ENCODE measurements at regions of chr12 and their contacts with region 1.

Region 1: GRCh38 chr12:50074936-50075807 is 10.0 kb upstream of the SMARCD1 start:
- DNase-seq: peak; percentile 90 to 94
- H3K4me3 ChIP-seq: no peak overlapping the region
- H3K27ac ChIP-seq: peak overlapping the region in 2 of 5 donors; percentile 7 to 16
- H3K4me1 ChIP-seq: peaks cover 0 to 20% (median 18%) of the 10 kb centered on the region in 4 donors
- H3K27me3 ChIP-seq: no peaks in the 10 kb centered on the region
- CTCF ChIP-seq: peak in 5 of 7 experiments; percentile 89 to 95 (median 93)
- EP300 ChIP-seq: no peak
- POLR2A ChIP-seq: no peak

Region 2: GRCh38 chr12:49967042-49967776 is 108.0 kb before region 1 on chr12:
- intact Hi-C with region 1: loop called (anchors 5 kb)
- DNase-seq: peak; percentile 95 to 96
- H3K4me3 ChIP-seq: peak overlapping the region; percentile 37 to 49 (median 40)
- H3K27ac ChIP-seq: peak overlapping the region in 2 of 5 donors; percentile 17 to 27
- H3K4me1 ChIP-seq: peaks cover 8 to 41% (median 34%) of the 10 kb centered on the region in 4 donors
- H3K27me3 ChIP-seq: peaks cover 0 to 46% (median 0%) of the 10 kb centered on the region in 3 donors
- CTCF ChIP-seq: peak in 6 of 7 experiments; percentile 70 to 97 (median 90)
- EP300 ChIP-seq: no peak
- POLR2A ChIP-seq: no peak

Region 3: GRCh38 chr12:49983892-49984291 is 91.3 kb before region 1 on chr12:
- intact Hi-C with region 1: no loop called
- DNase-seq: peak in 1 of 2 donors; percentile 88
- H3K4me3 ChIP-seq: no peak overlapping the region
- H3K27ac ChIP-seq: peak overlapping the region in 3 of 5 donors; percentile 3 to 56 (median 26)
- H3K4me1 ChIP-seq: peaks cover 7 to 38% (median 21%) of the 10 kb centered on the region in 4 donors
- H3K27me3 ChIP-seq: no peaks in the 10 kb centered on the region
- CTCF ChIP-seq: no peak
- EP300 ChIP-seq: no peak
- POLR2A ChIP-seq: no peak

Region 4: GRCh38 chr12:50174971-50175715 is 100.0 kb after region 1 on chr12:
- intact Hi-C with region 1: loop called (anchors 10 kb)
- DNase-seq: peak in 1 of 2 donors; percentile 92
- H3K4me3 ChIP-seq: no peak overlapping the region
- H3K27ac ChIP-seq: no peak overlapping the region
- H3K4me1 ChIP-seq: no peaks in the 10 kb centered on the region
- H3K27me3 ChIP-seq: no peaks in the 10 kb centered on the region
- CTCF ChIP-seq: peak in 5 of 7 experiments; percentile 41 to 68 (median 65)
- EP300 ChIP-seq: no peak
- POLR2A ChIP-seq: no peak